Ovary (tissue), 10 donors: ENCODE measurements at regions of chr12 and their contacts with region 1.

Region 1: DNA sequence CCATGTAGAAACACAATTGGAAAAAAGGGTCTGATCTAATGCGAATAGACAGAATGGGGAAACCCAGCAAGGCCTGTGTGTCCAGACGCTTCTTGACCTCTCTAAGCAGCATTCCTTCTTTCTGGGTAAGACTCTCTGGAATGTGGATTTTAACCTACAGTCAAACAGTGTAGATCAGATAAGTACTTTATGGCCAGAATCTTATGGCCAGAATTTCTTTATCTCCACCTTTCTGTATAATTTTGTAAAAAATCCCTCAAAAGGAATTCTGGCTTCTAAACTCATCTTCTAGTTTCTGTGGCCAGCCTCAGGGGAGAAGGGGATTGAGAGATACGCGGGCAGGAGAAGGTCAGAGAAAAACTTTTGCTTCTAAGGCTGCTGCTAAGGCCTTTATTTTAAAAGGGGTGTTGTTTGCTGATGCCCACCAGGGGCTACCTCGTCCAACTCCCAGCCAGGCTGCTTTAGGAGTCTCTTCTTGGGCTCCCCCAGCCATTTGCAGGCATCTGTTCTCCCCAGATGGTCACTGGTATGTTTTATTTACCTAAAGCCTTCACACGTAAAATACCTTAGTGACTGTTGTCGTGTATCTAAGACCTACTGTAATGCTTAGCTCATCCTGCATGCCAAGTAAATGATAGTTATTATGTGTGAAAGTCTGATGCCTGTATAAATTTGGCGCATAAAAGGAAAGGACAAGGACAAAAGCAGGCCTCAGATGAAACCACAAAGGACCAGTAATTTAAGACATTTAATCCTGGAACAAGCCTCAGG is 68.4 kb downstream of the ANO6 start:
- DNase-seq: no peak
- H3K4me3 ChIP-seq: no peak overlapping the region
- H3K27ac ChIP-seq: no peak overlapping the region
- H3K4me1 ChIP-seq: peaks cover 10% of the 10 kb centered on the region
- H3K27me3 ChIP-seq: no peaks in the 10 kb centered on the region
- CTCF ChIP-seq: no peak
- EP300 ChIP-seq: no peak
- POLR2A ChIP-seq: no peak

Region 2: GRCh38 chr12:45234139-45234846 is 50.0 kb before region 1 on chr12:
- intact Hi-C with region 1: loop called in 1 of 4 experiments (anchors 10 kb)
- DNase-seq: peak; percentile 36 to 52 (median 48)
- H3K4me3 ChIP-seq: no peak overlapping the region
- H3K27ac ChIP-seq: peak overlapping the region; percentile 33 to 70
- H3K4me1 ChIP-seq: peaks cover 16% of the 10 kb centered on the region
- H3K27me3 ChIP-seq: no peaks in the 10 kb centered on the region
- CTCF ChIP-seq: no peak
- EP300 ChIP-seq: peak; percentile 21
- POLR2A ChIP-seq: no peak

Region 3: GRCh38 chr12:45324391-45324790 is 40.1 kb after region 1 on chr12:
- intact Hi-C with region 1: no loop called
- DNase-seq: no peak
- H3K4me3 ChIP-seq: no peak overlapping the region
- H3K27ac ChIP-seq: no peak overlapping the region
- H3K4me1 ChIP-seq: peaks cover 5% of the 10 kb centered on the region
- H3K27me3 ChIP-seq: no peaks in the 10 kb centered on the region
- CTCF ChIP-seq: no peak
- EP300 ChIP-seq: no peak
- POLR2A ChIP-seq: no peak